CD4-positive, alpha-beta T cell (primary cell): ENCODE measurements at regions of chr3 and their contacts with region 1.

Region 1: GRCh38 chr3:16511681-16512434 is 1.6 kb downstream of the RFTN1 start:
- DNase-seq: peak; percentile 57 to 93 (median 68)
- ATAC-seq: peak; percentile 83
- H3K4me3 ChIP-seq: peak overlapping the region; percentile 92
- H3K4me3 Mint-ChIP-seq: peak overlapping the region; percentile 91
- H3K27ac ChIP-seq: peak overlapping the region; percentile 46 to 85
- H3K27ac Mint-ChIP-seq: peak overlapping the region; percentile 89
- H3K4me1 ChIP-seq: peaks cover 72% of the 10 kb centered on the region
- H3K4me1 Mint-ChIP-seq: peaks cover 84% of the 10 kb centered on the region
- H3K27me3 ChIP-seq: no peaks in the 10 kb centered on the region
- H3K27me3 Mint-ChIP-seq: no peaks in the 10 kb centered on the region
- CTCF ChIP-seq: no peak

Region 2: DNA sequence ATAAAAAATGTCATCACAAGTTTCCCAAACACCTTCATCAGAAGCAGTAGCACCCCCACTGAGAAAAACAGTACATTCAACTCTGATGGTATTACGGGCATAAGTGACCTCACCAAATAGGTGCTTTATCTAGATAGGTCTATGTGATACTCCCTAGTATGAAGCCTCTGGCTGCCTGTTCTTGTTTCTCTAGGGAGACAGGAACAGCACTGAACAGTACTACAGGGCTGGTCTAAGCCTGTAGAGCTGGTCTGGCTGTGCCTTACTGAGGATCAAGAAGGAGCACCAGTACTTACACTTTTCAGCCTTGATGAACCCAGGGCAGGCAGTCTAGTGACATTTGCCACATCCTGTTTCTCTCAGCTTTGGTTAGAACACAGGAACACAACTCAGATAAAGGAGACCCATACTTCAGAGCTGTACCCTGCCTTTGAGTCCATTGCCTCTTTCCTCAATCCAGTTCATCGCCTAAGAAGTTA is 210.9 kb before region 1 on chr3:
- CTCF ChIA-PET with region 1: interaction called, 5 read pairs
- POLR2A ChIA-PET with region 1: interaction called, 16 read pairs
- intact Hi-C with region 1: loop called in 1 of 2 experiments (anchors 2 kb)
- DNase-seq: peak; percentile 43 to 90 (median 52)
- ATAC-seq: peak; percentile 73
- H3K4me3 ChIP-seq: peak overlapping the region; percentile 33
- H3K4me3 Mint-ChIP-seq: peak overlapping the region; percentile 91
- H3K27ac ChIP-seq: peak overlapping the region; percentile 63 to 81
- H3K27ac Mint-ChIP-seq: peak overlapping the region; percentile 96
- H3K4me1 ChIP-seq: peaks cover 71% of the 10 kb centered on the region
- H3K4me1 Mint-ChIP-seq: peaks cover 97% of the 10 kb centered on the region
- H3K27me3 ChIP-seq: no peaks in the 10 kb centered on the region
- H3K27me3 Mint-ChIP-seq: no peaks in the 10 kb centered on the region
- CTCF ChIP-seq: no peak

Region 3: DNA sequence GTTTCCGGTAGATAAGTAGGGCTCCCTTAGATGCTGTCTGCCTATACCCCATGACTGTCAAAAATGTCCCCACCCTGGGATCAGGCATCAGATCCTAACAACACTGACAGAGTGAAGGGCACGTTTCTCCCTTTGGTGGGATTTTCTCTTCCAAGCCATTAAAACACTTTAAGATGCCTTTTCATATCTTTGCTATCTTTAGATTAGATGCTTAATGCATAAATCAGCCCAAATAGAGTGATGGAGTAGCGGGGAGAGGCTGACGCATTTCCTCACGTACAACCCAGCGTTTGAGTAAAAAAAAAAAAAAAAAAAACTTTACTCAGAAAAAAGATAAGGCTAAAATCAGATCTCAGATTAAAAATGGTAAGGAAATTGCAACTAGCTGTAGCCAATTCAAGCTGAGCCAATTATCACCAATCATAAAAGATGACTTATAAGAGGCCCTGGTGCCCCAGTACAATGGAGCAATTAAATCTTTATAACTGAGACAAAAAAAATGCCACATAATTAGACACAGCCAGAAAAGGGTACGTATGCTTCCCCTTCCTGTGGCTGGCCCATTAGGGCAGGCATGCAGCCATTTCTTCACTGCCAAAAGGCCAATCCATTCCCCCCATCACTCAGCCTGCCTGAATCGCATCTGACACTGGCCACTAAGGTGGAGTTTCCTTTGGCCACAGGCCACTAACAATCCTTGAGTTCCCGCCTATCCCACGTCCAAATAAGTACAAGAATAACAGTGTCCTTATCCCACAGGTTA is 43.3 kb before region 1 on chr3:
- CTCF ChIA-PET with region 1: interaction called, 4 read pairs
- POLR2A ChIA-PET with region 1: interaction called, 4 read pairs
- intact Hi-C with region 1: loop called in 1 of 2 experiments (anchors 2 kb)
- DNase-seq: peak in 5 of 14 experiments; percentile 24 to 65 (median 48)
- ATAC-seq: peak; percentile 81
- H3K4me3 ChIP-seq: no peak overlapping the region
- H3K4me3 Mint-ChIP-seq: peak overlapping the region; percentile 76
- H3K27ac ChIP-seq: peak overlapping the region; percentile 18 to 30
- H3K27ac Mint-ChIP-seq: peak overlapping the region; percentile 95
- H3K4me1 ChIP-seq: peaks cover 38% of the 10 kb centered on the region
- H3K4me1 Mint-ChIP-seq: peaks cover 58% of the 10 kb centered on the region
- H3K27me3 ChIP-seq: no peaks in the 10 kb centered on the region
- H3K27me3 Mint-ChIP-seq: no peaks in the 10 kb centered on the region
- CTCF ChIP-seq: no peak

Region 4: GRCh38 chr3:16489326-16490277 is 22.3 kb before region 1 on chr3:
- CTCF ChIA-PET with region 1: interaction called, 3 read pairs
- POLR2A ChIA-PET with region 1: interaction called, 37 read pairs
- intact Hi-C with region 1: loop called in 1 of 2 experiments (anchors 2 kb)
- DNase-seq: no peak
- ATAC-seq: no peak
- H3K4me3 ChIP-seq: no peak overlapping the region
- H3K4me3 Mint-ChIP-seq: no peak overlapping the region
- H3K27ac ChIP-seq: no peak overlapping the region
- H3K27ac Mint-ChIP-seq: no peak overlapping the region
- H3K4me1 ChIP-seq: no peaks in the 10 kb centered on the region
- H3K4me1 Mint-ChIP-seq: peaks cover 52% of the 10 kb centered on the region
- H3K27me3 ChIP-seq: no peaks in the 10 kb centered on the region
- H3K27me3 Mint-ChIP-seq: no peaks in the 10 kb centered on the region
- CTCF ChIP-seq: no peak

Region 5: DNA sequence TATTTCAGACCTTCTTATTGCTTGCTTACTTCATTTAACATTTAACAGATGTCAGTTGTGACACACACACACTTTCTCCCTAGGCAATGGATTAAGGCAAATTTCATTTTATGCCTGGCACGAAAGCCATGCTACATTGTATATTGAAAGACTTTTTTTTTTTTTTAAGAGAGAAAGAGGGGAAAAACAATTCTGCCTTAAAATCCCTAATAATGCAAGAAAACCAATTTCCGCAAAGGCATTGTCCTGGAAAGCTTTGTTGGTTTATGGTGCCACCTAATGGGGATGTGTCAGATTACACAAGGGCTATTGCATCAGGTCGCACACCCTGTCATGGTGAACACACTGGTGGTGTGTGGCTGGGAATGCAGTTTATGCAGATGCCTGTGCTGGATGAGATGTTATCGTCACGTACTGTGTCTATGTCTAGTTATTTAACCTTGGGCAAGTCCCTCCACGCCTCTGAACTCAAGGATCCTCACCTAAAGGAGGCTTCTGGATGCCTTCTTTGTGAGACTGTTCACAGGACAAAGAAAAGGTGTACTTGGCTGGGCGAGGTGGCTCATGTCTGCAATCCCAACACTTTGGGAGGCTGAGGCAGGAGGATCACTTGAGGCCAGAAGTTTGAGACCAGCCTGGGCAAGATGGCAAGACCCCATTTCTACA is 39.0 kb after region 1 on chr3:
- CTCF ChIA-PET with region 1: interaction called, 5 read pairs
- POLR2A ChIA-PET with region 1: no interaction called
- intact Hi-C with region 1: loop called in 1 of 2 experiments (anchors 1 kb)
- DNase-seq: peak; percentile 43 to 90 (median 62)
- ATAC-seq: peak; percentile 100
- H3K4me3 ChIP-seq: no peak overlapping the region
- H3K4me3 Mint-ChIP-seq: no peak overlapping the region
- H3K27ac ChIP-seq: no peak overlapping the region
- H3K27ac Mint-ChIP-seq: peak overlapping the region; percentile 16
- H3K4me1 ChIP-seq: peaks cover 5% of the 10 kb centered on the region
- H3K4me1 Mint-ChIP-seq: no peaks in the 10 kb centered on the region
- H3K27me3 ChIP-seq: no peaks in the 10 kb centered on the region
- H3K27me3 Mint-ChIP-seq: peaks cover 4% of the 10 kb centered on the region
- CTCF ChIP-seq: peak; percentile 91